ENCODE measurements at regions of chr11 and their contacts with region 1.

Region 1: GRCh38 chr11:125111343-125112207 is at the start of gene TMEM218:
- DNase-seq: peak; percentile 100
- ATAC-seq: peak; percentile 99
- H3K4me3 ChIP-seq: peak within 1 kb of the TSS; percentile 99
- H3K27ac ChIP-seq: peak within 1 kb of the TSS; percentile 8
- H3K4me1 ChIP-seq: peaks cover 7% of the 10 kb centered on the region
- H3K27me3 ChIP-seq: 0 out of 2 replicates have a peak, but pooled peaks cover 1% of the 10 kb centered on the region
- CTCF ChIP-seq: no peak
- total RNA-seq, gene TMEM218: 33.6 and 37.0 TPM in 2 replicates

Region 2: GRCh38 chr11:123363556-123363955 is 1748.0 kb before region 1 on chr11:
- CTCF ChIA-PET with region 1: no interaction called
- POLR2A ChIA-PET with region 1: interaction called, 10 read pairs
- intact Hi-C with region 1: no loop called
- DNase-seq: no peak
- ATAC-seq: no peak
- H3K4me3 ChIP-seq: no peak overlapping the region
- H3K27ac ChIP-seq: no peak overlapping the region
- H3K4me1 ChIP-seq: no peaks in the 10 kb centered on the region; the same call in 1 of the 2 replicates
- H3K27me3 ChIP-seq: peaks cover 84% of the 10 kb centered on the region
- CTCF ChIP-seq: no peak

Region 3: DNA sequence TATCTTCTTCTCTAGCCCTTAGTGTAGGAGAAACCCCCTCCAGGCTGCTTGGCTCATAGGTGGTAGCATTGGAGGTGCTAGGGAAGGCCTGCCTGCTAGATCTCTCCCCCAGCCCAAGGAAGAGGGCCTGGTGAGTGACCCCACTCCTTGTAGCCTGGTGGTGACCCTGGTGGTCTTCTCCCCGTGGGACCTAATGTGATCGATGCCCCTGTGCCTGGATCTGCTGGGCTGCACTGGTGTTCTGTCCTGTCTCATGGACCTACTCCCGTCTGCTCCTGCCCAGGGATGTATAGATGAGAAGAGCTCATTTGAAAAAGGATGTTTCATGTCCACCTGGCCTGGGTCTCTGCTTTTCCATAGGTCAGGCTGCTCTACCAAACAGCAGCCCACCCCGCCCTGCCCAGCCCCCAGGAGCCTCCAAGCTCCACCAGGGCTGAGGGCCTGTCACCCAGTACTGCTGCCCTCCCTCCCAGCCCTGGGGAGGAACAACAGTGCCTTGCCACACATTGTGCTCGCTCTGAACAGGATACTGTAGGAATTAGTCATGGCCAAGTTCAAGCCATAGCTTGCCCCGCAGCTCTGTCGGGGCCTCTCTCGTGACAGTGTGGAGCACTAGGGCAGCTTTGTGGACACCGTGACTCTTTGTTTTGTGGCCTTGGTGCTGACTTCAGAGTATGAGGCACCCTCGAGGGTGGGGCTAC is 28.8 kb before region 1 on chr11:
- CTCF ChIA-PET with region 1: no interaction called
- POLR2A ChIA-PET with region 1: interaction called, 27 read pairs
- intact Hi-C with region 1: no loop called
- DNase-seq: peak; percentile 94
- ATAC-seq: peak; percentile 96
- H3K4me3 ChIP-seq: no peak overlapping the region
- H3K27ac ChIP-seq: peak overlapping the region; percentile 95
- H3K4me1 ChIP-seq: peaks cover 22% of the 10 kb centered on the region
- H3K27me3 ChIP-seq: no peaks in the 10 kb centered on the region
- CTCF ChIP-seq: no peak